ENCODE measurements at regions of chr3 and their contacts with region 1.

Region 1: DNA sequence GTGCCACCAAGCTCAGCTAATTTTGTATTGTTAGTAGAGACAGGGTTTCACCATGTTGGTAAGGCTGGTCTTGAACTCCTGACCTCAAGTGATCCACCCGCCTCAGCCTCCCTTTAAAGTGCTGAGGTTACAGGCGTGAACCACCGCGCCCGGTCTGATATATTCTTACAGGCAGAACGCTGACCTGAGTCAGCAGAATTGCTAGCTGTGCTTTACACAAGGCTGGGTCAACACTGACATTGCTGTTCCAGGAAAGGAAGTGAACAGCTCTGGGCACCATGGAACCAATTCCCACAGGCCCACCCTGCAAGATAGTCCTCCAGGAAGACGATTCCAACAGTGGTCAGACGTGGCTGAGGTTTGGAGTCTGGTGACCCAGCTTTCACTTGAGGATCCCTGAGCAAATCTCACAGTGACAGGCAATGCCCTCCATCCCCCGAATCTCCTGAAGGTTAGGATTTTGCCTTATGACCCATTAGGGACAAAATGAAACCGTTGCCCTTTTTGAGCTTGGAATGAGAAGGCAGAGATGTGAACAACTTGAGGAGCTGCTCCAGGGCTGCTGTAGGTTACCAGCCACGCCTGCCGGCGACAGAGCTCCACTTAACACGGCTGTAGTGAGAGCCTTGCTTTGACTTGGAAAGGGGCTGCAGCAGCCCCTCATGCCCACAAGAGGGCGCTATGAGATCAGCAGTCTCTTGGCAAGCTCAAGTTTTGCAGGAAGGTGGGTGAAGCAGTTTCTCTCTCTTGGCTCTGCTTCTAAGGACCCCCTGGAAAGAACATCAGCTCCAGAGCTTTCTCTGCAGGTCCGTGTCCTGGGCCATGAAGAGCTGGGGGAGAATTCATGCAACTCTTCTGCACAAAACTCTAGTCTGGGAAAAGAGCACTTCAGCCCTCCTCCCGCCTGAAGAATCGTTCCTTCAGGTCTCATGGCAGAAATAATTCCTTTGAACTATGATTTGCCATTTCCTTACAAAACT is 74.1 kb downstream of the SENP2 start:
- DNase-seq: peak; percentile 88
- ATAC-seq: peak; percentile 90
- H3K4me3 Mint-ChIP-seq: no peak overlapping the region
- H3K27ac Mint-ChIP-seq: no peak overlapping the region; the same call in 1 of the 2 replicates
- H3K4me1 Mint-ChIP-seq: peaks cover 12% of the 10 kb centered on the region
- H3K27me3 Mint-ChIP-seq: no peaks in the 10 kb centered on the region; the same call in 1 of the 2 replicates
- CTCF ChIP-seq: peak; percentile 99

Region 2: DNA sequence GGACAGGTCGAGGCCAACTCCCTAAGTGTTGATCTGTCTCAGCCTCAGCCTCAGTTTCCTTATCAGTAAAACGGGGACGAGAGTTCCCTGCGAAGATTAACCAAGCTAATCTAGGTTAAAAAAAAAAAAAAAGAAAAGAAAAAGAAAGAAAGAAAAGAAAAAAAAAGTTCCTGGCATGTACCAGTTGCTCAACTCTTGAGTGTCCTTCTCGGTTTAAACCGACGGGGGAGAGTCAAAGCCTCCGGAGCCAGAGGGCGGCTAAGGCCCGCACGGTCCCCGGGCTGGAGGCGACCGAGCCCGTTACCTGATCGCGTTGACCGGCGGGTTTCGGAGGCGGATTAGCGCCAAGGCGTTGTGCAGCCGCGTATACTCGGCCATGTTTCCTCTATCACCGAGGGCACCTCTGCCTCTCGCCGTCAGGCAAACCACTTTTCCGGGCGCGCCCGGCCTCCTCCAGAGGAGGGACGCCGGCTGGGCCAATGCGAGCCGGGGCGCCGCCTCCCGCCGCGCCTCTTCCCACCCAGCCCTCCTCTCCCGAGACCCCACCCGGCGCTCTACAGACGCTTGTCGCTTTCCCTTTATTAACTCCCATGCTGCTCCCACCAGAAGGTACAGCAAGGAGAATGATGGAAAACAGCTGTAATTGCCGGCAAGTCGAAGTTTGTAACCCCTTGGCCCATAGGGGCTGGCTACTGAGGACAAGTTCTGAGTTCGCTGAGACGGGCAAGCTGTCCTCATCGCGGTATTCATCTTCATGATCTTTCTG is 406.4 kb before region 1 on chr3 and contains the start of gene EHHADH:
- CTCF ChIA-PET with region 1: no interaction called
- POLR2A ChIA-PET with region 1: no interaction called
- DNase-seq: peak; percentile 60
- ATAC-seq: peak; percentile 89
- H3K4me3 Mint-ChIP-seq: peak within 1 kb of the TSS; percentile 71
- H3K27ac Mint-ChIP-seq: no peak within 1 kb of the TSS
- H3K4me1 Mint-ChIP-seq: peaks cover 7% of the 10 kb centered on the region
- H3K27me3 Mint-ChIP-seq: no peaks in the 10 kb centered on the region
- CTCF ChIP-seq: no peak
- total RNA-seq, gene EHHADH: 4.2 to 4.9 TPM (median 4.3 TPM) in 3 replicates

Region 3: DNA sequence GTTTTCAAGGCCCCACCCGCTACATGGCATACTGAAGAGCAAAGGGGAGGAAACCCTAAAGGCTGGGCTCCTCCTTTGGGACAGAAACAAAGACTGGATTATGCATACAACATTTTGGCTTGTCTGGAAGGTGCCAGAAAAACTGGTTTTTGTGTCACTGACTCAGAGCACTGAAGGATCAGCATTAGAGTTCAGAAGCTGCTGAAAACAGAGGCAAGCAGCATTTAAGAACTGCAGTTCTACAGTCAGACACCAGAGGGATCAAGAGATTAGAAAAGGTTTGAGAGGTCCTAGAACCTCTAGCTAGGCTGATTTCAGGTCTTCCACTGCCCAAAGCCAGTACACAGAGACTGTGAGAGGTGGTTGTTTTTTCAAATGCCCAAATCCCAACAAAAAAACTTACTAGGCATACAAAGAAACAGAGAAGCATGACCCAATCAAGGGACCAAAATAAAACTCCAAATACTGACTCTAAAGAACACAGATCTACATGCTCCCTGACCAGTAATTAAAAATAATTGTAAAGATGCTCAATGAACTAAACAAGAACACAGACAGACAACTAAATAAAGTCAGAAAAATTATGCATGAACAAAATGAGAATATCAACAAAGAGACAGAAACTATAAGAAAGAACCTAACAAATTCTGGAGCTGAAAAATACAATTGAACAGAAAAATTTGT is 17.1 kb after region 1 on chr3:
- CTCF ChIA-PET with region 1: interaction called, 48 read pairs
- POLR2A ChIA-PET with region 1: no interaction called
- DNase-seq: no peak
- ATAC-seq: peak; percentile 97
- H3K4me3 Mint-ChIP-seq: no peak overlapping the region
- H3K27ac Mint-ChIP-seq: peak overlapping the region; percentile 29
- H3K4me1 Mint-ChIP-seq: peaks cover 8% of the 10 kb centered on the region
- H3K27me3 Mint-ChIP-seq: no peaks in the 10 kb centered on the region
- CTCF ChIP-seq: peak; percentile 74

Region 4: GRCh38 chr3:185733980-185734724 is 73.9 kb after region 1 on chr3:
- CTCF ChIA-PET with region 1: interaction called, 48 read pairs
- POLR2A ChIA-PET with region 1: no interaction called
- DNase-seq: peak; percentile 65
- ATAC-seq: peak; percentile 95
- H3K4me3 Mint-ChIP-seq: no peak overlapping the region
- H3K27ac Mint-ChIP-seq: peak overlapping the region; percentile 95
- H3K4me1 Mint-ChIP-seq: peaks cover 65% of the 10 kb centered on the region
- H3K27me3 Mint-ChIP-seq: no peaks in the 10 kb centered on the region
- CTCF ChIP-seq: peak; percentile 46; the same call in 1 of the 2 replicates

Region 5: GRCh38 chr3:185770109-185770508 is 109.9 kb after region 1 on chr3:
- CTCF ChIA-PET with region 1: interaction called, 34 read pairs
- POLR2A ChIA-PET with region 1: no interaction called
- DNase-seq: no peak
- ATAC-seq: peak; percentile 28
- H3K4me3 Mint-ChIP-seq: no peak overlapping the region
- H3K27ac Mint-ChIP-seq: peak overlapping the region; percentile 66
- H3K4me1 Mint-ChIP-seq: peaks cover 76% of the 10 kb centered on the region
- H3K27me3 Mint-ChIP-seq: no peaks in the 10 kb centered on the region
- CTCF ChIP-seq: no peak

Region 6: GRCh38 chr3:185846037-185846436 is 185.8 kb after region 1 on chr3:
- CTCF ChIA-PET with region 1: interaction called, 20 read pairs
- POLR2A ChIA-PET with region 1: interaction called, 3 read pairs
- DNase-seq: no peak
- ATAC-seq: peak; percentile 85
- H3K4me3 Mint-ChIP-seq: no peak overlapping the region
- H3K27ac Mint-ChIP-seq: no peak overlapping the region
- H3K4me1 Mint-ChIP-seq: peaks cover 22% of the 10 kb centered on the region
- H3K27me3 Mint-ChIP-seq: no peaks in the 10 kb centered on the region; the same call in 1 of the 2 replicates
- CTCF ChIP-seq: no peak

Region 7: GRCh38 chr3:185912929-185913901 is 253.0 kb after region 1 on chr3:
- CTCF ChIA-PET with region 1: interaction called, 58 read pairs
- POLR2A ChIA-PET with region 1: interaction called, 5 read pairs
- DNase-seq: no peak
- ATAC-seq: peak; percentile 6
- H3K4me3 Mint-ChIP-seq: no peak overlapping the region
- H3K27ac Mint-ChIP-seq: peak overlapping the region; percentile 73; the same call in 1 of the 2 replicates
- H3K4me1 Mint-ChIP-seq: no peaks in the 10 kb centered on the region
- H3K27me3 Mint-ChIP-seq: no peaks in the 10 kb centered on the region
- CTCF ChIP-seq: no peak